Right ventricle myocardium inferior (tissue), 1 donor: ENCODE measurements at regions of chr10 and their contacts with region 1.

Region 1: DNA sequence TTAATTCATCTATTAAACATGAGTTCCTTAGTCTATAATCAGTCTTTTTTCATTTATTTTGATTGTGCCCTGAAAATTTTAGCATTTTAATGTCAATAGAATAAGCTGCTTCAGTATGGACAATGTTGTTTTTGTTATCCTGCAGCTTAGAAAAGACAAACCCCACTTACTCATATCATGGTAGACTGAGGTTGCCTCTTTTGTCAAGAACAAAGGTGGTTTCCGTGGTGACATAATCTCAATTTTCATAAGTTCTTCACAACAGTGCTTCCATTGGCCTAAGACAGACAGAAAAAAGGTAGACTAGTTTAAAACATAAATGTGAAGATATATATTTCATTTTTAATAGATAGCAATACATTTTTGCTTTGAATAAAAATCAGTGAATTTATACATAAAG is 69.1 kb downstream of the RTKN2 start:
- DNase-seq: no peak
- ATAC-seq: no peak

Region 2: GRCh38 chr10:62038609-62039190 is 160.9 kb before region 1 on chr10:
- intact Hi-C with region 1: loop called (anchors 5 kb)
- DNase-seq: peak; percentile 72
- ATAC-seq: peak; percentile 68